Posterior vena cava (tissue), 2 donors: ENCODE measurements at regions of chr2 and their contacts with region 1.

Region 1: GRCh38 chr2:19863303-19864041 is 38.3 kb downstream of the TTC32 start:
- DNase-seq: peak; percentile 93

Region 2: GRCh38 chr2:18387441-18388206 is 1475.8 kb before region 1 on chr2:
- intact Hi-C with region 1: loop called in 1 of 2 experiments (anchors 10 kb)
- DNase-seq: peak; percentile 89

Region 3: GRCh38 chr2:18749912-18750526 is 1113.5 kb before region 1 on chr2:
- intact Hi-C with region 1: loop called (anchors 2 to 10 kb)
- DNase-seq: no peak

Region 4: DNA sequence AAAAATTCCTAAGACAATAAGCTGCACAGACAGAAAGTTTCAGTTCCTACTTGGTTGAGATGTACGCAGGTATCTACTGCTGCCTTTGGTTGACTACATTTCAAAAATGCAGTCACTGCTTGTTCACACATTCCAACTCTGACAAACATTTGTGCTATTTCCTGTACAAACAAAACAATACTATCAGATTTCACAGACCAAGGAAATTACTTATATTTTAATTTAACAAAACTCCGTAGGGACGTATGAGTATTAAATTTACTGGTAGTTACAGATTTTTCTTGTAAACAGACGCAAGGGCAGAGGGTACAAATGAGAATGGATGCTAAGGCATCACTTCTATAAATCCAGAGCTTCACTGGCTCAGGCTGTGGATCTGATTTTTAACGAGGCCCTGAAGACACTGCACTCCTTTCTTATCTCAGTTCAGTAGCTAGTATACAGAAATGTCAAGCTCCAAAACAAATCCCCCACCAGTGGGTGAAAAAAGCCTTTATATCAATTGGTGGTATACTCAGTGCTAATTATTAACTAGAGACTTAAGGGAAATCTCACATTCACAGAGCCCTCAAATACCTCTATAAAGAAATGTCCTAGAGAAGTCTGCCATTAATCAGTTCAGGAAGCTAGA is 70.0 kb after region 1 on chr2:
- intact Hi-C with region 1: no loop called
- DNase-seq: no peak